Naive thymus-derived CD4-positive, alpha-beta T cell (primary cell): ENCODE measurements at regions of chr6 and their contacts with region 1.

Region 1: GRCh38 chr6:32971581-32972352 is 3.4 kb downstream of the BRD2 start:
- DNase-seq: peak; percentile 99 to 100 (median 100)
- ATAC-seq: peak; percentile 73
- H3K4me3 ChIP-seq: peak overlapping the region; percentile 98
- H3K4me3 Mint-ChIP-seq: peak overlapping the region; percentile 89 to 100 (median 98)
- H3K27ac ChIP-seq: peak overlapping the region; percentile 94
- H3K27ac Mint-ChIP-seq: peak overlapping the region; percentile 78 to 100 (median 99)
- H3K4me1 ChIP-seq: peaks cover 26 to 32% of the 10 kb centered on the region in 2 donors
- H3K4me1 Mint-ChIP-seq: peaks cover 31 to 47% (median 40%) of the 10 kb centered on the region in 7 donors
- H3K27me3 ChIP-seq: no peaks in the 10 kb centered on the region
- H3K27me3 Mint-ChIP-seq: peaks cover 0 to 5% (median 0%) of the 10 kb centered on the region in 5 donors

Region 2: GRCh38 chr6:31356946-31357466 is 1614.8 kb before region 1 on chr6 and contains the start of gene HLA-B:
- CTCF ChIA-PET with region 1: no interaction called
- POLR2A ChIA-PET with region 1: no interaction called
- intact Hi-C with region 1: loop called in 1 of 2 experiments (anchors 5 kb)
- DNase-seq: peak; percentile 65 to 91 (median 82)
- ATAC-seq: peak; percentile 90
- H3K4me3 ChIP-seq: peak within 1 kb of the TSS; percentile 68
- H3K4me3 Mint-ChIP-seq: peak within 1 kb of the TSS; percentile 80 to 100 (median 98)
- H3K27ac ChIP-seq: peak within 1 kb of the TSS; percentile 100
- H3K27ac Mint-ChIP-seq: peak within 1 kb of the TSS; percentile 99 to 100 (median 100)
- H3K4me1 ChIP-seq: peaks cover 28 to 33% of the 10 kb centered on the region in 2 donors
- H3K4me1 Mint-ChIP-seq: peaks cover 49 to 66% (median 58%) of the 10 kb centered on the region in 7 donors
- H3K27me3 ChIP-seq: no peaks in the 10 kb centered on the region
- H3K27me3 Mint-ChIP-seq: peaks cover 0 to 19% (median 0%) of the 10 kb centered on the region in 5 donors
- total RNA-seq, gene HLA-B: 5,136 to 7,364 (median 5,516) TPM

Region 3: DNA sequence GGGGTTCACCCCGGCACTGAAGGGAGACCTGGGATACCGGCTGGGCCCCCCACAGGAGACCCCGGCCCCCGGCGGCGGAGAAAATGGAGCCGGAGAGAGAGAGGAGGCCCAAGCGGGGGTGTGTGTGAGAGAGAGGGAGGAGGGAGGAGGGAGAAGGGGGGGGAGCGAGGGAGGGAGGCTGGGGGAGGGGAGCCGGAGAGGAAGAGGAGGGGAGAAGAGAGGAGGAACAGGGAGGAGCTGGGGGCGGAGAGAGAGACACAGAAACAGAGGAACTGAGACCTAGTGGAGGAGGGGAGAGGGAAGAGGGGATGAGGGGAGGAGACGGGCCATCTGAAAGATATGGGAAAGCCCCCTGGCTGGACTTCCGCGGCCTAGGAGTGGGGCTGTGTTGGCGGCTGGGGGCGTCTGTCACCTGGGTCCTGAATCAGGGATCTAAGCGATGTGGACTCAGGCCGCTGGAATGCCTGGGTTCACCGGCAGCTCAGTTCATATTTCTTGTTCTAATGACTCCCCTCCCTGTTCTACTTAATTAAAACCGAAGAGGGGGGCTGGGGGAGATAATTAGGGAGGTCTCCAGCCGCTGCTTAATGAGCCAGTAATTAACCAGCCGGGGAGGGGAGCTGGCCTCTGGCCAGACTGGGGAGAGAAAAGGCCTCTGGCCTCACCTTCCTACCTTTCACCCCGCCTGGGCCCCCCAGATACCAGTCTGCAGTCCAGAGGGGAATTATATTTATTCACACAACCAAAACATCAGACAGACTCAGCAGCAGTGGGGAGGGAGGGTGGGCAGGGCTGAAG is 781.5 kb before region 1 on chr6 and contains the start of gene PBX2:
- CTCF ChIA-PET with region 1: no interaction called
- POLR2A ChIA-PET with region 1: interaction called, 21 read pairs
- intact Hi-C with region 1: loop called in 1 of 2 experiments (anchors 2 kb)
- DNase-seq: peak; percentile 35 to 82 (median 76)
- ATAC-seq: peak; percentile 80
- H3K4me3 ChIP-seq: peak within 1 kb of the TSS; percentile 94
- H3K4me3 Mint-ChIP-seq: peak within 1 kb of the TSS; percentile 97 to 100 (median 98)
- H3K27ac ChIP-seq: peak within 1 kb of the TSS; percentile 97
- H3K27ac Mint-ChIP-seq: peak within 1 kb of the TSS; percentile 86 to 100 (median 97)
- H3K4me1 ChIP-seq: peaks cover 37 to 46% of the 10 kb centered on the region in 2 donors
- H3K4me1 Mint-ChIP-seq: peaks cover 52 to 62% (median 58%) of the 10 kb centered on the region in 7 donors
- H3K27me3 ChIP-seq: no peaks in the 10 kb centered on the region
- H3K27me3 Mint-ChIP-seq: no peaks in the 10 kb centered on the region
- total RNA-seq, gene PBX2: 105 to 221 (median 144) TPM

Region 4: GRCh38 chr6:32885698-32886286 is 86.0 kb before region 1 on chr6:
- CTCF ChIA-PET with region 1: interaction called, 12 read pairs
- POLR2A ChIA-PET with region 1: interaction called, 10 read pairs
- intact Hi-C with region 1: loop called in 1 of 2 experiments (anchors 1 kb)
- DNase-seq: peak in 7 of 9 donors; percentile 48 to 78 (median 68)
- ATAC-seq: peak; percentile 69
- H3K4me3 ChIP-seq: no peak overlapping the region
- H3K4me3 Mint-ChIP-seq: no peak overlapping the region
- H3K27ac ChIP-seq: no peak overlapping the region
- H3K27ac Mint-ChIP-seq: no peak overlapping the region
- H3K4me1 ChIP-seq: no peaks in the 10 kb centered on the region
- H3K4me1 Mint-ChIP-seq: peaks cover 0 to 4% (median 0%) of the 10 kb centered on the region in 7 donors
- H3K27me3 ChIP-seq: no peaks in the 10 kb centered on the region
- H3K27me3 Mint-ChIP-seq: peaks cover 0 to 10% (median 0%) of the 10 kb centered on the region in 5 donors

Region 5: GRCh38 chr6:32984605-32985389 is 13.0 kb after region 1 on chr6:
- CTCF ChIA-PET with region 1: interaction called, 76 read pairs
- POLR2A ChIA-PET with region 1: interaction called, 442 read pairs
- intact Hi-C with region 1: loop called in 1 of 2 experiments (anchors 1 kb)
- DNase-seq: peak; percentile 69 to 87 (median 84)
- ATAC-seq: peak; percentile 86
- H3K4me3 ChIP-seq: no peak overlapping the region
- H3K4me3 Mint-ChIP-seq: peak overlapping the region in 1 of 10 donors; percentile 4
- H3K27ac ChIP-seq: no peak overlapping the region
- H3K27ac Mint-ChIP-seq: peak overlapping the region in 6 of 9 donors; percentile 34 to 75 (median 46)
- H3K4me1 ChIP-seq: peaks cover 0 to 6% of the 10 kb centered on the region in 2 donors
- H3K4me1 Mint-ChIP-seq: peaks cover 15 to 29% (median 22%) of the 10 kb centered on the region in 7 donors
- H3K27me3 ChIP-seq: no peaks in the 10 kb centered on the region
- H3K27me3 Mint-ChIP-seq: no peaks in the 10 kb centered on the region

Region 6: DNA sequence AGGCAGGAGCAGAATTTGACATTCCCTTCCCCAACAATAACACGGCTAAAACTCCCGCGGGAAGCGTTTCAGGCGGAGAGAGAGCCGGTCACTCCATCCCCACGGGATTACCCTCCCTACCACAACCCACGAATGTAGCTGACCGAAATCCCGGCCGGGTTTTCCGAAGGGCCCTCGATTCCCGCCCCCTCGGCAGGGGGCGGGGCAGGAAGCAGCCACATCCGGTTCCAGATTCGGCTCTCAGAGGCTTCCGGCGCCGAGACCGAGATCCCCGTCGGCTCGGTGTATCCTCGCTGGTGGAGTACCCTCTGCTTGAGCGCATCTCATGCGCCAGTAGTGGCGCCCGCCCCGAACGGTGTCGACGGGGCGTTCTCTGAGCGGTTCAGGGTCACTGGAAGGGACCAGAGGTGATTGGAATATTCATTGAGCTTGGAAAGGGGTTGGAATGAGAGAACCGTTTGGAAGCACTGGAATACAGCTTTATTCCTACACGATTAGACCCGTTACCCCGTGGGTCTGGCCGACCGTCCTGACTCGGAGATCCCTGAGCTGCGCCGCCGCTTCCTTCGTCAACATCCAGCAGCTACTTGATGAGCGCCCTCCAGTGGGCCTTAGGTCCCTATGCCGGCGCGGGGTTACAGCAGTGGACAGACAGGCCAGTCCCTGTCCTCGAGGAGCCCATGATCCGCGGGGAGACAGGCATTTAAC is 327.6 kb after region 1 on chr6:
- CTCF ChIA-PET with region 1: no interaction called
- POLR2A ChIA-PET with region 1: interaction called, 3 read pairs
- intact Hi-C with region 1: loop called in 1 of 2 experiments (anchors 5 kb)
- DNase-seq: peak; percentile 89 to 96 (median 93)
- ATAC-seq: peak; percentile 88
- H3K4me3 ChIP-seq: peak overlapping the region; percentile 78
- H3K4me3 Mint-ChIP-seq: peak overlapping the region; percentile 95 to 100 (median 99)
- H3K27ac ChIP-seq: peak overlapping the region; percentile 92
- H3K27ac Mint-ChIP-seq: peak overlapping the region; percentile 95 to 100 (median 99)
- H3K4me1 ChIP-seq: peaks cover 5 to 10% of the 10 kb centered on the region in 2 donors
- H3K4me1 Mint-ChIP-seq: peaks cover 25 to 48% (median 38%) of the 10 kb centered on the region in 7 donors
- H3K27me3 ChIP-seq: no peaks in the 10 kb centered on the region
- H3K27me3 Mint-ChIP-seq: peaks cover 0 to 3% (median 0%) of the 10 kb centered on the region in 5 donors

Region 7: GRCh38 chr6:33570806-33571636 is 599.3 kb after region 1 on chr6:
- CTCF ChIA-PET with region 1: no interaction called
- POLR2A ChIA-PET with region 1: no interaction called
- intact Hi-C with region 1: loop called in 1 of 2 experiments (anchors 5 kb)
- DNase-seq: peak; percentile 81 to 98 (median 95)
- ATAC-seq: peak; percentile 91
- H3K4me3 ChIP-seq: peak overlapping the region; percentile 85
- H3K4me3 Mint-ChIP-seq: peak overlapping the region; percentile 80 to 99 (median 94)
- H3K27ac ChIP-seq: peak overlapping the region; percentile 98
- H3K27ac Mint-ChIP-seq: peak overlapping the region; percentile 99 to 100 (median 100)
- H3K4me1 ChIP-seq: peaks cover 19 to 21% of the 10 kb centered on the region in 2 donors
- H3K4me1 Mint-ChIP-seq: peaks cover 8 to 57% (median 31%) of the 10 kb centered on the region in 7 donors
- H3K27me3 ChIP-seq: no peaks in the 10 kb centered on the region
- H3K27me3 Mint-ChIP-seq: peaks cover 0 to 3% (median 0%) of the 10 kb centered on the region in 5 donors